ENCODE measurements at regions of chr4 and their contacts with region 1.

Region 1: GRCh38 chr4:39469429-39470077 is 10.7 kb downstream of the LIAS start:
- DNase-seq: peak; percentile 46 to 67 (median 48)
- ATAC-seq: peak; percentile 81
- H3K4me3 ChIP-seq: no peak overlapping the region
- H3K27ac ChIP-seq: no peak overlapping the region
- H3K4me1 ChIP-seq: no peaks in the 10 kb centered on the region; a peak in 2 of 5 replicates
- H3K27me3 ChIP-seq: no peaks in the 10 kb centered on the region
- CTCF ChIP-seq: peak; percentile 72 to 96 (median 86)
- EP300 ChIP-seq: peak; percentile 38; the same call in 1 of the 2 replicates
- POLR2A ChIP-seq: no peak
- RAD21 ChIP-seq: peak; percentile 88 to 92

Region 2: GRCh38 chr4:39458505-39459300 is 10.8 kb before region 1 on chr4 and contains the starts of genes LIAS and RPL9:
- CTCF ChIA-PET with region 1: no interaction called
- POLR2A ChIA-PET with region 1: interaction called, 11 read pairs
- in situ Hi-C with region 1: no loop called
- intact Hi-C with region 1: no loop called
- DNase-seq: peak; percentile 91 to 99 (median 95)
- ATAC-seq: peak; percentile 95
- H3K4me3 ChIP-seq: peak within 1 kb of the TSS; percentile 82
- H3K27ac ChIP-seq: peak within 1 kb of the TSS; percentile 93
- H3K4me1 ChIP-seq: peaks cover 3 to 12% of the 10 kb centered on the region in 2 experiments; a peak in 4 of 5 replicates
- H3K27me3 ChIP-seq: no peaks in the 10 kb centered on the region
- CTCF ChIP-seq: no peak; a peak in 1 of 6 replicates
- EP300 ChIP-seq: peak; percentile 56; the same call in 1 of the 2 replicates
- POLR2A ChIP-seq: peak; percentile 99
- RAD21 ChIP-seq: no peak
- polyA plus RNA-seq, gene LIAS: 40.3 to 56.6 TPM
- polyA plus RNA-seq, gene RPL9: 3,844 to 3,942 TPM

Region 3: GRCh38 chr4:39495454-39496213 is 26.1 kb after region 1 on chr4:
- CTCF ChIA-PET with region 1: no interaction called
- POLR2A ChIA-PET with region 1: no interaction called
- in situ Hi-C with region 1: no loop called
- intact Hi-C with region 1: no loop called
- DNase-seq: no peak
- ATAC-seq: peak; percentile 33; the same call in 1 of the 3 replicates
- H3K4me3 ChIP-seq: no peak overlapping the region
- H3K27ac ChIP-seq: no peak overlapping the region
- H3K4me1 ChIP-seq: no peaks in the 10 kb centered on the region; a peak in 1 of 5 replicates
- H3K27me3 ChIP-seq: no peaks in the 10 kb centered on the region
- CTCF ChIP-seq: no peak
- EP300 ChIP-seq: no peak
- POLR2A ChIP-seq: no peak
- RAD21 ChIP-seq: no peak

Region 4: GRCh38 chr4:39591290-39591689 is 121.7 kb after region 1 on chr4:
- CTCF ChIA-PET with region 1: interaction called, 14 read pairs
- POLR2A ChIA-PET with region 1: no interaction called
- in situ Hi-C with region 1: no loop called
- intact Hi-C with region 1: loop called (anchors 1 kb)
- DNase-seq: peak in 2 of 4 experiments; percentile 14 to 30
- ATAC-seq: peak; percentile 72
- H3K4me3 ChIP-seq: no peak overlapping the region
- H3K27ac ChIP-seq: no peak overlapping the region
- H3K4me1 ChIP-seq: no peaks in the 10 kb centered on the region
- H3K27me3 ChIP-seq: no peaks in the 10 kb centered on the region
- CTCF ChIP-seq: peak; percentile 43 to 57 (median 44); a peak in 4 of 6 replicates
- EP300 ChIP-seq: no peak
- POLR2A ChIP-seq: no peak
- RAD21 ChIP-seq: peak in 1 of 2 experiments; percentile 54; a peak in 2 of 4 replicates

Region 5: GRCh38 chr4:39658756-39659155 is 189.2 kb after region 1 on chr4:
- CTCF ChIA-PET with region 1: interaction called, 11 read pairs
- POLR2A ChIA-PET with region 1: no interaction called
- in situ Hi-C with region 1: no loop called
- intact Hi-C with region 1: loop called (anchors 2 kb)
- DNase-seq: no peak
- ATAC-seq: no peak
- H3K4me3 ChIP-seq: no peak overlapping the region
- H3K27ac ChIP-seq: no peak overlapping the region
- H3K4me1 ChIP-seq: no peaks in the 10 kb centered on the region; a peak in 1 of 5 replicates
- H3K27me3 ChIP-seq: no peaks in the 10 kb centered on the region
- CTCF ChIP-seq: peak; percentile 7 to 56 (median 16); a peak in 2 of 6 replicates
- EP300 ChIP-seq: no peak
- POLR2A ChIP-seq: no peak
- RAD21 ChIP-seq: peak in 1 of 2 experiments; percentile 63; a peak in 3 of 4 replicates

Region 6: DNA sequence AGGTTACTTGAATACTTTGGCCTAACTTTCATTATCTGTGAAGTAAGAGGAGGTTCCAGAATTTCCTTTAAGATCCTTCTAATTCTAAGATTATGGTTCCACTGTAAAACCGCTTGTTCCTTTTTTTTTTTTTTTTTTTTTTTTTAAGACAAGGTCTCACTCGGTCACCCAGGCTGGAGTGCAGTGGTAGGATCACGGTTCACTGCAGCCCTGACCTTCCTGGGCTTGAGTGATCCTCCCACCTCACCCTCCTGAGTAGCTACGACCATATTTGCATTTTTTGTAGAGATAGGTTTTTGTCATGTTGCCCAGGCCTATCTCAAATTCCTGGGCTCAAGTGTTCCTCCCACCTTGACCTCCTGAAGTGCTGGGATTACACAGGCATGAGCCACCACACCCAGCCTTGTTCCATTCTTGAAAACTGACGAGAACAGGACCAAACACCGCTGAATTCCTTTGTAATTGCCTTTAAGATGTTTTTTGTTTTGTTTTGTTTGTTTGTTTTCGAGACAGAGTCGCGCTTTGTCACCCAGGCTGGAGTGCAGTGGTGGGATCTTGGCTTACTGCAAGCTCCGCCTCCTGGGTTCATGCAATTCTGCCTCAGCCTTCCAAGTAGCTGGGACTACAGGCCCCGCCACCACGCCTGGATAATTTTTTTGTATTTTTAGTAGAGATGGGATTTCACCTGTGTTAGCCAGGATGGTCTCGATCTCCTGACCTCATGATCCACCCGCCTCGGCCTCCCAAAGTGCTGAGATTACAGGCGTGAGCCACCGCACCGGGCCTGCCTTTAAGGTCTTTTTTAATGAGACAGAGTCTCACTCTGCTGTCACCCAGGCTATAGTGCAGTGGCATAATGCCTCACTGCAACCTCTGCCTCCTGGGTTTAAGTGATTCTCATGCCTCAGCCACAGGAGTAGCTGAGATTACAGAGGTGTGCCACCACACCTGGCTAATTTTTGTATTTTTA is 501.4 kb after region 1 on chr4:
- CTCF ChIA-PET with region 1: interaction called, 66 read pairs
- POLR2A ChIA-PET with region 1: interaction called, 3 read pairs
- in situ Hi-C with region 1: loop called (anchors 5 kb)
- intact Hi-C with region 1: loop called (anchors 1 kb)
- DNase-seq: peak in 2 of 4 experiments; percentile 18 to 87
- ATAC-seq: peak; percentile 96
- H3K4me3 ChIP-seq: no peak overlapping the region
- H3K27ac ChIP-seq: peak overlapping the region; percentile 58; the same call in 2 of the 3 replicates
- H3K4me1 ChIP-seq: peaks cover 15 to 19% of the 10 kb centered on the region in 2 experiments; a peak in 4 of 5 replicates
- H3K27me3 ChIP-seq: no peaks in the 10 kb centered on the region
- CTCF ChIP-seq: no peak
- EP300 ChIP-seq: peak; percentile 38; the same call in 1 of the 2 replicates
- POLR2A ChIP-seq: no peak
- RAD21 ChIP-seq: no peak

Region 7: DNA sequence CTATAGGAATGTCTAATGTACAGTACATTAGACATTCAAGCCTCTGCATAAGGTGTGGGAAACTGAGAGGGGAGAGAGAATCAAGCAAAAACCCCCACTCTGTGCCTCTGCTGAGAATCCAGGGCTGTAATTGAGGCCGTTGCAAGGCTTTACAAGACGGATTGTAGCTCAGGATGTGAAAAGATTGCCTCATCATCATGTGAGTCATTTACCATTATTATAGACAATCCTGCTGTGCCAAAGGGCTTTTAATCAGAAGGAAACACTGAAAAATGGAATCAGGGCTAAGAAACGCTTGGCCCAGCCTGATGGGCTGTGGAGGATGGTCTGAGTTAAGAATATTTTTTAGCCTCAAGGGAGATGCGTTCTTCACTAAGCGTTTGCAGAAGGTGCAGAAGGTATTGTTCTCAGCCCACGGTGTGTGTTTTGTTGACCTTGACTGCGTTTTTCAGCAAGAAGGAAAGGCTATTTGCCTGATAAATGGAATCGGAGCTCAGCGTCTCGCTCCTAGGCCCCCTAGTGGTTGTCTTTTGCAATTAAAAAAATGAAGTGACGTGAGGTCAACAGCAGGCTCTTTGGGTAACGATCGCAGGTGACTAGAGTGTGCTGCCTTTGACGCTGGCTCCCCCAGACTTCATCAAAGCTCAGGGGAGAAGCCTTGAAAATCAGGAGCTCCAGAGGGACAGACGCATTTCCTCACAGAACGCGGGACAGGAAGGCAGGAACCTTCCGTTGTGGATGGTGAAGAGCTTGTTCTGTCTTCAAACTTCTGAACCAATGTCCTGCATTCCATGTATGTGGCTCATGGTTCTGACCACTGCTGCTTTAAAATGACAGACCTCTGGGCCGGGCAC is 847.5 kb after region 1 on chr4:
- CTCF ChIA-PET with region 1: interaction called, 5 read pairs
- POLR2A ChIA-PET with region 1: no interaction called
- in situ Hi-C with region 1: no loop called
- intact Hi-C with region 1: loop called (anchors 10 kb)
- DNase-seq: peak; percentile 63 to 87 (median 68)
- ATAC-seq: peak; percentile 85
- H3K4me3 ChIP-seq: no peak overlapping the region
- H3K27ac ChIP-seq: peak overlapping the region; percentile 61
- H3K4me1 ChIP-seq: peaks cover 12 to 37% of the 10 kb centered on the region in 2 experiments
- H3K27me3 ChIP-seq: no peaks in the 10 kb centered on the region
- CTCF ChIP-seq: peak; percentile 74 to 90 (median 80)
- EP300 ChIP-seq: peak; percentile 22; the same call in 1 of the 2 replicates
- POLR2A ChIP-seq: no peak
- RAD21 ChIP-seq: peak; percentile 51 to 65